BJ (cell line): ENCODE measurements at regions of chr1 and their contacts with region 1.

Region 1: GRCh38 chr1:160376525-160377131 is 9.8 kb downstream of the NHLH1 start:
- DNase-seq: no peak
- H3K4me3 ChIP-seq: no peak overlapping the region
- H3K27me3 ChIP-seq: no peaks in the 10 kb centered on the region; the same call in 1 of the 2 replicates
- CTCF ChIP-seq: peak; percentile 97

Region 2: GRCh38 chr1:159197561-159198557 is 1178.8 kb before region 1 on chr1:
- CTCF ChIA-PET with region 1: no interaction called
- POLR2A ChIA-PET with region 1: no interaction called
- DNase-seq: peak; percentile 6
- H3K4me3 ChIP-seq: no peak overlapping the region
- H3K27me3 ChIP-seq: no peaks in the 10 kb centered on the region; the same call in 1 of the 2 replicates
- CTCF ChIP-seq: peak; percentile 92

Region 3: DNA sequence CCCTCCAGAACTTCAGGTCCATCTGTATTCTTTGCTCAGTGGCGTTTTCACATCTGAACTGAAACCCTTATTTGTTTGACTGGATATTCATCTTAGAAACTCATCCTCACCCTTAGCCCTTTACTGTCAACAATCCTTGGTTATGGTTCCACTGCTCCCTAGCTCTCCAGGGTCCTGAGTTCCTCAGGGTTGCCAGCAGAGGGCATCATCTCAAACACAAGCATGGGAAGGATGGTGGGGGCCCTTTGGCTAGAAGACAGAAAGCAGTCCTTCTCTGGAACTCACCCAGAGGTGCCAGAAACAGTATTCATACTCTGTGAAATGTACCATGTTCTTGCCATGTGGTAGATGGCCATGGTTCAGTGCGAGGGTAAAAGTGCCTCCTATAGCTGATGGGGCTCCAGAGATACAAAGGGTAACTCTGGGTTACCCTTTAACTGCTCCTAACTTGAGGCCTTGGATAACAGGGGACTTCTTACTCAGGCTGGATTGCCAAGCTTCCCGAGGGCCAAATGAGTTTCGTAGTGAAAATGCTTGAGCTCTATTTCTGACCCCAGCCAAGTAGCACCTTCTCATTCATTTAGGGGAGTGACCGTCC is 22.1 kb before region 1 on chr1:
- CTCF ChIA-PET with region 1: interaction called, 86 read pairs
- POLR2A ChIA-PET with region 1: no interaction called
- DNase-seq: no peak
- H3K4me3 ChIP-seq: no peak overlapping the region
- H3K27me3 ChIP-seq: no peaks in the 10 kb centered on the region
- CTCF ChIP-seq: peak; percentile 61

Region 4: DNA sequence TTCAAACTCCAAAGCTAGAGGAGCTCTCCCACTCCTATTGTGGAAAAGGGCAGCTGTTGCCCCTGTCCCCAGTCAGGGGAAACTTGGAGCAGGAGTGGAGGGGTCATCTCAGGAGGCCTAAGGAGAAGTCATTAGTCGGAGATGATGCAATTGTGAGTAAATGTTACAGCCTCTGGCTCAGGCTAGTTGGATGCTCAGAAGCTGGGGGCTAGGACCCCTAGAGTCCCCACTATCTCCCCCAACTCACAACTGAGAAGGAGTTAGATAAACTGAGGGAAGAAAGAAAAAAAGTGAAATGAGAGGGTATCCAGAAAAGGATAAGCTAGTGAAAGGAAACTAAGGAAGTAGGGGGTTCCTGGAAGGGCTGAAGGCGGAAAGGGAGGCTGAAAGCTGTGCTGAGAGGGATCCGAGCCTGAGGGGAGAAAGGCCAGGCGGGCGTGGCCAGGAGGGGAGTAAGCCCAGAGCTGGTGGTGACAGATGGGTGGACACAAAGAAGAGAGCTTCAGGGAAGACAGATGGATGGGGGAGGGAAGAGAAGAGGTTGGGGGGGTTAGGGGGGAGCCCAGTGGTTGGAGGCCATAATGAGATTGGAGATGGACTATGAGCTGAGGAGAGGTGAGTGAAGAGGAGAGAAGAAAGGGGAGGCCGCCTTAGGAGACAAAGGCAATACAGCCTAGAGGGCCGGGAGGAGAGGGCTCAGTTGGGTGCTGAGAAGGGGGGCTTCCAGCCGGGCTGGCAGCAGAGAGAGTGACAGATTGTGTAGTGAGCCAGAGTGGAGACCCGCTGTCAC is 14.3 kb before region 1 on chr1:
- CTCF ChIA-PET with region 1: interaction called, 70 read pairs
- POLR2A ChIA-PET with region 1: no interaction called
- DNase-seq: no peak
- H3K4me3 ChIP-seq: no peak overlapping the region
- H3K27me3 ChIP-seq: no peaks in the 10 kb centered on the region
- CTCF ChIP-seq: no peak

Region 5: GRCh38 chr1:160489513-160490261 is 113.1 kb after region 1 on chr1:
- CTCF ChIA-PET with region 1: no interaction called
- POLR2A ChIA-PET with region 1: no interaction called
- DNase-seq: no peak
- H3K4me3 ChIP-seq: no peak overlapping the region
- H3K27me3 ChIP-seq: no peaks in the 10 kb centered on the region
- CTCF ChIP-seq: no peak